ENCODE measurements at regions of chr11 and their contacts with region 1.

Region 1: DNA sequence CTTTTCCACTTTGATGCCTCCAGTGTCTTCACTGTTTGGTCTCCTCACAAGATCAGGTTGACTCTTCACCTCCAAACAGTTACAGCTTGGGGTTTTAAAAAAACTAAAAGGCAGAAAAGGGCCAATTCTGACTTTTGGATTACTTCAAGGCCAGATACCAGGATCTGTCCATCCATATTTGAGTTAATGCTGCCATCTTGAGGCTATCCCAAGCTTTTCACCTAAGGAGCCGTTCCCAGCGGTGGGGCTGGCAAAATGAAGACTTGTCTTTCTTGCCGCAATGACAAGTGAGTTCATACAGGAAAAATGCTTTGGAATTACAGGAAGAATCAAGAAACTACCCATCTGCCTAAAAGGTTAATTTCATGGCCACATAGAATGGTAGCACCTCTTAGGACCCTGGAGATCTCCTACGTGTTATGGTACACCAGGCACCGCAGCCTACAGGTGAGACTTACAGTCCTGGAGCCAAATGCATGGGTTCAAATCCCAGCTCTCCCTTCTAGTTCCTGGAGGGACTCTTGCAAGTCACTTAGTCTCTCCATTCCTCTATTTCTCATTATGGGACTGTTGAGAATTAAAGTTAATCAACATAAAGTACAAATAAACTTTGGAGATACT is 6.0 kb upstream of the OR5B21 start:
- DNase-seq: no peak
- H3K4me3 ChIP-seq: no peak overlapping the region
- H3K27ac ChIP-seq: no peak overlapping the region
- H3K4me1 ChIP-seq: no peaks in the 10 kb centered on the region
- H3K27me3 ChIP-seq: no peaks in the 10 kb centered on the region
- CTCF ChIP-seq: peak; percentile 34 to 70 (median 59)

Region 2: DNA sequence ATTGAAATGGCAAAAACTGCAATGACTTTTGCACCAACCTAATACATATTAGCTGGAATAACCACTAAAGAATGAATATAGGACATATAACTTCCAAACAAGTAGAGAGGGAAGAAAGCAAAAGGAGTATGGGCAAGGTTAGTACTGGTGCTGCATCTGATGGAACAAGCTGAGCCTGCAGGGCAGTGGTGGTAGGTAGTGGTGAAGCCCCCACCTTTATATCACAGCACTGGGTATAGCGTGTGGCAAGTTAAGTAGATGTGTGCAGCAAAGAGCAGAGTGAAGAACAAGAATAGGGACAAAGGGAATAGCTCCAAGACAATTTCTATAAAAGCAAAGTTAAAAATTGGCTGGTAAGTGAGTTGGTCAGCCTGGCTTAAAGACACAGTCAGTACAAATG is 690.0 kb before region 1 on chr11:
- intact Hi-C with region 1: loop called (anchors 10 kb)
- DNase-seq: no peak
- H3K4me3 ChIP-seq: no peak overlapping the region
- H3K27ac ChIP-seq: no peak overlapping the region
- H3K4me1 ChIP-seq: no peaks in the 10 kb centered on the region
- H3K27me3 ChIP-seq: no peaks in the 10 kb centered on the region
- CTCF ChIP-seq: no peak

Region 3: DNA sequence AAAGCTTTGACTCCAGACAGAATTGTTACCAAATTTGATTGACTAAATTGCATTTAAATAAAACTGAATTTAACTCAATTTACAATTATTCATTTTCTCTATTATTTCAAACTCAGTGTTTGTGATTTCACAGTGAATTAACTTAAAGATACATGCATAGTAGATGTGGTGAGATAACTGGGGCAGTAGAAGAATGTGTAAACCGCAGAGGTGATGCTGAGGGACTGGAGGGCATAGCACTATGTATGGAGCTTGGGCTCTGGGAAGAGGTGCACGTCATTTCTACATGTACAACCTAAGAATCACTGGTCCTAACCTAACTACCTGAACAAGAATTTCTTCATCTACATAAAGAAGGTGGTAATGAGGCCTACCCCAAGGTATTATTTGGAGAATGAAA is 168.7 kb before region 1 on chr11:
- intact Hi-C with region 1: no loop called
- DNase-seq: no peak
- H3K4me3 ChIP-seq: no peak overlapping the region
- H3K27ac ChIP-seq: no peak overlapping the region
- H3K4me1 ChIP-seq: no peaks in the 10 kb centered on the region
- H3K27me3 ChIP-seq: no peaks in the 10 kb centered on the region
- CTCF ChIP-seq: no peak